ENCODE measurements at regions of chr16 and their contacts with region 1.

Region 1: GRCh38 chr16:22297114-22297878 is at the start of gene POLR3E:
- DNase-seq: peak; percentile 99 to 100 (median 100)
- ATAC-seq: peak; percentile 96 to 97
- H3K4me3 ChIP-seq: peak within 1 kb of the TSS; percentile 89
- H3K27ac ChIP-seq: peak within 1 kb of the TSS; percentile 33
- H3K4me1 ChIP-seq: peaks cover 2% of the 10 kb centered on the region
- H3K27me3 ChIP-seq: no peaks in the 10 kb centered on the region
- total RNA-seq, gene POLR3E: 27.9 to 33.5 (median 33.0) TPM

Region 2: GRCh38 chr16:22007509-22008214 is 289.6 kb before region 1 on chr16 and contains the start of gene MOSMO:
- intact Hi-C with region 1: loop called in 1 of 4 experiments (anchors 10 kb)
- DNase-seq: peak; percentile 78 to 92 (median 92)
- ATAC-seq: peak; percentile 94 to 97
- H3K4me3 ChIP-seq: peak within 1 kb of the TSS; percentile 98
- H3K27ac ChIP-seq: peak within 1 kb of the TSS; percentile 80
- H3K4me1 ChIP-seq: peaks cover 2% of the 10 kb centered on the region
- H3K27me3 ChIP-seq: no peaks in the 10 kb centered on the region
- total RNA-seq, gene MOSMO: 10.6 to 14.8 (median 12.2) TPM

Region 3: GRCh38 chr16:22195695-22196558 is 101.4 kb before region 1 on chr16:
- intact Hi-C with region 1: loop called in 3 of 4 experiments (anchors 2 to 5 kb)
- DNase-seq: peak; percentile 85 to 94 (median 94)
- ATAC-seq: peak; percentile 42 to 51
- H3K4me3 ChIP-seq: peak overlapping the region; percentile 69
- H3K27ac ChIP-seq: peak overlapping the region; percentile 37
- H3K4me1 ChIP-seq: no peaks in the 10 kb centered on the region
- H3K27me3 ChIP-seq: no peaks in the 10 kb centered on the region

Region 4: DNA sequence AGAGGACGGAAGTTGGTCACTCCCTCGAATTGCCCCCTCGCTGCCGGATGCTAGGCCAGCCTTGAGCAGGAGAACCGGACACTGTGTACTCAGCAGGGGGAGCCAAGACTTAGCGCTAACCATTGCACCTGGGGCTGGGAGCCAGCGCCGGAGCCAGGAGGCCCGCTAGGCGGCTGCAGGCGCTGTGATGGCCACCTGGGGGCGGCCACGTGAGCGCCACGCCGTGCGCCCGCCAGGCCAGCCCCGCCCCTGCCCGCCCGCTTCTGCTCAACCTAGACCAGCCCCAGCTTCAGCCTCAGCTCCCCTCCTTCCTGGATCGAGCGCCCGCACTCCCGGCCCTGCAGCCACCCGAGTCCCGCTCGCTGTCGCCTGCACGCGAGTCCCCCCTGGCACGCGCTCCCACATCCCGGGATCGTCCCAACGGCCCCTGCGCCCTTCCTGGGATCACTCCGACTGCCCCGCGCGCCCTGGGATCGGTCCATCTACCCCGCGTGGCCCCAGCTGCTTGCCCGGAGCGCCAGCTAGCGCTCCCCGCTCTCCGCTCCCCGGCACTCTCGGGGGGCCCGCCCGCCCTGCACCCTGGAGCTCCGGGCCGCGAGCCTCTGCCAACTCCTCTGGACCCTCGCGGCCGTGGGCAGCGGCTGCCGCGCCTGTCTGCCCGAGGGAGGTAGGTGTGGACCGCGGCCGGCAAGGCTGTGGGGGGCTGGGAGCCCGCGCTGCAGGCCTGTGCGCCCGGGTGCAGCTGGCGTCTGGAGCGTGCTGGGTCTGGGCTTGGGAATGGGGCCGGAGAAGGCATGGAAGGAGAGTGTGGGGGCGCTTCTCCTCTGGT is 91.1 kb before region 1 on chr16 and contains the start of gene EEF2K:
- intact Hi-C with region 1: loop called in 1 of 4 experiments (anchors 5 kb)
- DNase-seq: peak; percentile 93 to 98 (median 97)
- ATAC-seq: peak; percentile 95
- H3K4me3 ChIP-seq: peak within 1 kb of the TSS; percentile 55
- H3K27ac ChIP-seq: peak within 1 kb of the TSS; percentile 61
- H3K4me1 ChIP-seq: peaks cover 8% of the 10 kb centered on the region
- H3K27me3 ChIP-seq: no peaks in the 10 kb centered on the region
- total RNA-seq, gene EEF2K: 28.1 to 38.3 (median 31.4) TPM

Measured in right cardiac atrium (tissue), 5 donors.